Left ventricle myocardium superior (tissue), 1 donor: ENCODE measurements at regions of chr21 and their contacts with region 1.

Region 1: DNA sequence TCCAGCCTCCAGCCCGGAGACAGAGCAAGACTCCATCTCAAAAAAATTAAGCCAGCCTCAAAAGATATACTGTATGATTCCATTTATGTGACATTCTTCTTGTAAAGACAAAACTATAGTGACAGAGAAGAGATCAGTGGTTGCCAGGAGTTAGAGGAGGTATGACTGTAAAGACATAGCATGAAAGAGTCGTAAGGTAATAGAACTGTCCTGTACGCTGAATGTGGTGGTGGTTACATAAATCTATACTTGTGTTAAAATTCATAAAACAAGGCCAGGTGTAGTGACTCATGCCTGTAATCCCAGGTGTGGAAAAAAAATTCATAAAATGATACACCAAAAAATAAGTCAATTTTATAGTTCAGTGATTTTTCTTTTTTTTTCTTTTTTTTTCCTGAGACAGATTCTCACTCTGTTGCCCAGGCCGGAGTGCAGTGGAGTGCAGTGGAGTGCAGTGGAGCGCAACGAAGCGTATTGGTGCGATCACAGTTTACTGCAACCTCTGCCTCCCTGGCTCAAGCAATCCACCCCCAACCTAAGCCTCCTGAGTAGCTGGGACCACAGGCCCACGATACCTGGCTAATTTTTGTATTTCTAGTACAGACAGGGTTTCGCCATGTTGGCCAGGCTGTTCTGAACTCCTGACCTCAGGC is 84.9 kb upstream of the CXADR start:
- DNase-seq: no peak
- ATAC-seq: no peak

Region 2: GRCh38 chr21:17461014-17461413 is 33.1 kb after region 1 on chr21:
- intact Hi-C with region 1: loop called (anchors 2 kb)
- DNase-seq: no peak
- ATAC-seq: peak; percentile 98

Region 3: DNA sequence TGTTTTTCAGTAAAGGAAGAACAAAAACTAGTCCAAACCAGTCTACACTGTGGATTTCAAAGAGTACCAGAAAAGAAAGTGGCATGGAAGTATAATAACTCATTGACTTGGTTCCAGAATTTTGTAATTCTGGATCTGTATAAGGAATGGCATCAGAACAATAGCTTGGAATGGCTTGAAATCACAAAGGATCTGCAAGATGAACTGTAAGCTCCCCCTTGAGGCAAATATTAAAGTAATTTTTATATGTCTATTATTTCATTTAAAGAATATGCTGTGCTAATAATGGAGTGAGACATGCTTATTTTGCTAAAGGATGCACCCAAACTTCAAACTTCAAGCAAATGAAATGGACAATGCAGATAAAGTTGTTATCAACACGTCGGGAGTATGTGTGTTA is 838.0 kb after region 1 on chr21:
- intact Hi-C with region 1: no loop called
- DNase-seq: no peak
- ATAC-seq: no peak